Right lobe of liver (tissue), 6 donors: ENCODE measurements at regions of chr5 and their contacts with region 1.

Region 1: GRCh38 chr5:5492087-5492933 is 69.8 kb downstream of the ICE1 start:
- DNase-seq: no peak
- ATAC-seq: peak; percentile 40 to 56 (median 48)
- H3K4me3 ChIP-seq: no peak overlapping the region
- H3K27ac ChIP-seq: no peak overlapping the region
- H3K4me1 ChIP-seq: peaks cover 0 to 8% (median 0%) of the 10 kb centered on the region in 4 donors
- H3K27me3 ChIP-seq: no peaks in the 10 kb centered on the region
- CTCF ChIP-seq: peak; percentile 64 to 71 (median 68)
- POLR2A ChIP-seq: no peak

Region 2: DNA sequence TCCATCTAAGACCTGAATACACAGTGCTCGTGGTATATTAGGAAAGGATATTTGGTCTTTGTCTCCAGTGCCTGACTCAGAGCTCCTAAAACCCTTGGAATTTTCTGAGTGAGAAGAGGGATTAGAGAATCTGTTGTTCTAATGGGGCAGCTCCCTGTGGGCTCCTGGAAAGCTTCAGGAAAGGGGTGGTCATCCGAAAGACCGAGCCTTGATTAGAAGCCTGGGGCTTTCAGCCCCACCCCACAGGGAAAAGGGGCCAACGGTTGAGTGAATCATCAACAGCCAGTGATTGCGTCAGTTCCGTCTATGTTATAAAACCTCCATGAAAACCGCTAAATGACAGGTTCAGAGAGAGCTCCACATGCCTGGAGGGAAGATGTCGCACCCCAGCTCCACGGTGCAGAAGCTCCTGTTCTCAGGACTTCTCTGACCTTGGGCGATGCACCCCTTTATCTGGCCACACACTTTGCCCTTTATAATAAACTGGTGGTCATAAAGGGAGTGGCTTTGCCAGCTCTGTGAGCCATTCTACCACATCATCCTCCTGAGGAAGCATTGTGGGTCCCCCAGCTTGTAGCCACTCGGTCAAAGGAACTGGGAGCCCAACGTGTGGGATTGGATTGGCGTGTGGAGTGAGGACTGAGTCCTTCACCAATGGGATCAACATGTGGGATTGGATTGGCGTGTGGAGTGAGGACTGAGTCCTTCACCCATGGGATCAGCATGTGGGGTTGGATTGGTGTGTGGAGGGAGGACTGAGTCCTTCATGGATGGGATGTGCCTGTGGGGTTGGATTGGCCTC is 140.8 kb before region 1 on chr5:
- intact Hi-C with region 1: no loop called
- DNase-seq: no peak
- ATAC-seq: peak in 2 of 4 donors; percentile 22 to 61
- H3K4me3 ChIP-seq: no peak overlapping the region
- H3K27ac ChIP-seq: no peak overlapping the region
- H3K4me1 ChIP-seq: no peaks in the 10 kb centered on the region
- H3K27me3 ChIP-seq: no peaks in the 10 kb centered on the region
- CTCF ChIP-seq: no peak
- POLR2A ChIP-seq: no peak

Region 3: DNA sequence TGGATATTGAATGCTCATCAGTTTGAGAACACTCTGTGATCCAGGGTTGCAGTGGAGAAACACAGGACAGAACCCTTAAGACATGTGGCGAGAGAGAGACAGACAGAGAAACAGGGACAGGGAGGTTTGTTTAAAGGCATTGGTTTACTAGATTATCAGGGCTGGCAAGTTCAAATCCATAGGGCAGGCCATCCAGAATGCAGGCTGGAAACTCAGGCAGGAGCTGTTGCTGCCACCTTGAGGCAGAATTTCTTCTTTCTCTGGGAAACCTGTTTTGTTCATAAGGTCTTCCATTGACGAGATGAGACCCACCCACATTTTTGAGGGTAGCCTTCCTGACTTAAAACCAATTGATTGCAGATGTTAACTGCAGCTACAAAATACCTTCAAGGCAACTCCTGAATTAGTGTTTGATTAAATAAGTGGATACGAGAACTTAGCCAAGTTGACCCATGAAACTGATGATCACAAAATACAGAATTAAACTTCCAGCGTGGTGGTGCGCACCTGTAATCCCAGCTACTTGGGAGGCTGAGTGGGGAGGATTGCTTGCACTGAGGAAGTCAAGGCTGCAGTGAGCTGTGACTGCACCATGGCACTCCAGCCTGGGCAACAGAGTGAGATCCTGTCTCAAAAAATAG is 1084.7 kb after region 1 on chr5:
- intact Hi-C with region 1: loop called in 1 of 2 experiments (anchors 10 kb)
- DNase-seq: peak in 1 of 3 donors; percentile 55
- ATAC-seq: peak; percentile 74 to 82 (median 78)
- H3K4me3 ChIP-seq: no peak overlapping the region
- H3K27ac ChIP-seq: no peak overlapping the region
- H3K4me1 ChIP-seq: peaks cover 0 to 13% (median 0%) of the 10 kb centered on the region in 4 donors
- H3K27me3 ChIP-seq: no peaks in the 10 kb centered on the region
- CTCF ChIP-seq: peak; percentile 56 to 67 (median 61)
- POLR2A ChIP-seq: no peak